ENCODE measurements at regions of chrX and their contacts with region 1.

Region 1: DNA sequence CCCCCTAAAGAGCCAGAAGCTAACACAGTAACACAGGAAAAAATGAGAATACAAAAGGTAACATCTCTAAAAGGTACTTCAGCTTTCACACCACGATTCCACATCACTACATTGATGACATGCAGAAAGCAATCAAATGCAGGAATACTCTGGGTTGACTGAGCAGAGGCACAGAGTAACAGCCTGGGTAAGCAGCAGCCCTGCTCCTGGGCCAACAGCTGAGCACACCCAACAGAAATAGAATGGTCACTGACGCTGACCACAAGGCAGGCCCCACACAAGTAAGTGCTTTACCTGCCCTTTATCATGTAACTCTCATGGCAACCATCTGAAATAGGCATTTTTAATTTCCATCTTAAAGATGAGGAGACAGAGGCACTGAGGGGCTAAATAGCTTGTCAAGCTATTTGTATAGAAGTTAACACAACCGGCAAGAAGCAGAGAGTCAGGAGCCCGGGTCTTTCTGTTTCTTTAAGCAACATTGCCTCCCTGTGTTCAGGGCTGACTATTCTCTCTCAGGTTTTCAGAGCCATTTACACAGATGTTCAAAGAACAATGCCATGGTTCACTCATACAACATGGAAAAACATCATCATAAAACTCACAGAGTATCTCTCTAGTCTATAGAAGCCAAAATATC is 168.9 kb downstream of the ZNF674 start:
- DNase-seq: peak; percentile 80
- H3K4me3 ChIP-seq: no peak overlapping the region
- H3K27ac ChIP-seq: no peak overlapping the region
- H3K4me1 ChIP-seq: peaks cover 4% of the 10 kb centered on the region
- H3K27me3 ChIP-seq: no peaks in the 10 kb centered on the region
- CTCF ChIP-seq: peak; percentile 21 to 32
- POLR2A ChIP-seq: no peak

Region 2: DNA sequence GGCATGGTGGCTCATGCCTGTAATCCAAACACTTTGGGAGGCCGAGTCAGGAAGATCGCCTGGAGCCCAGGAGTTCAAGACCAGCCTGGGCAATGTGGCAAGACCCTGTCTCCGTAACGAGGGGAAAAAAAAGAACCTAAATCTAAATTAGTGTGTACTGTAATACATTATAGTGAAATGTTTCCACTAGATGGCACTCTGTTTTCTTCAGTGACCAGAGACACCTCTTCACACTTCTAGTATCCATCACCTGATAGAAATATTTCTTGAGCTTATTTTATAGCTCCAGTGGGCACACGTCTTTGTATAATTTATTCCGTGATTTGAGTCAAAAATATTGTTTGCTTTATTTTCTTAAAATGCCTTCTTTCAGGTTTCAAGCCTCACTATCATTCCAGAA is 574.8 kb before region 1 on chrX:
- CTCF ChIA-PET with region 1: interaction called, 20 read pairs
- POLR2A ChIA-PET with region 1: no interaction called
- dilution Hi-C with region 1: no loop called
- intact Hi-C with region 1: no loop called
- DNase-seq: peak; percentile 43
- H3K4me3 ChIP-seq: no peak overlapping the region
- H3K27ac ChIP-seq: peak overlapping the region; percentile 36
- H3K4me1 ChIP-seq: peaks cover 31% of the 10 kb centered on the region
- H3K27me3 ChIP-seq: no peaks in the 10 kb centered on the region
- CTCF ChIP-seq: peak in 1 of 2 donors; percentile 9
- POLR2A ChIP-seq: no peak

Region 3: GRCh38 chrX:45849253-45849862 is 527.0 kb before region 1 on chrX:
- CTCF ChIA-PET with region 1: interaction called, 9 read pairs
- POLR2A ChIA-PET with region 1: no interaction called
- dilution Hi-C with region 1: no loop called
- intact Hi-C with region 1: loop called (anchors 1 kb)
- DNase-seq: peak; percentile 57
- H3K4me3 ChIP-seq: peak overlapping the region; percentile 47 to 87 (median 50)
- H3K27ac ChIP-seq: peak overlapping the region; percentile 37
- H3K4me1 ChIP-seq: peaks cover 5% of the 10 kb centered on the region
- H3K27me3 ChIP-seq: peaks cover 0 to 4% of the 10 kb centered on the region in 2 experiments
- CTCF ChIP-seq: peak; percentile 6 to 17
- POLR2A ChIP-seq: no peak

Region 4: DNA sequence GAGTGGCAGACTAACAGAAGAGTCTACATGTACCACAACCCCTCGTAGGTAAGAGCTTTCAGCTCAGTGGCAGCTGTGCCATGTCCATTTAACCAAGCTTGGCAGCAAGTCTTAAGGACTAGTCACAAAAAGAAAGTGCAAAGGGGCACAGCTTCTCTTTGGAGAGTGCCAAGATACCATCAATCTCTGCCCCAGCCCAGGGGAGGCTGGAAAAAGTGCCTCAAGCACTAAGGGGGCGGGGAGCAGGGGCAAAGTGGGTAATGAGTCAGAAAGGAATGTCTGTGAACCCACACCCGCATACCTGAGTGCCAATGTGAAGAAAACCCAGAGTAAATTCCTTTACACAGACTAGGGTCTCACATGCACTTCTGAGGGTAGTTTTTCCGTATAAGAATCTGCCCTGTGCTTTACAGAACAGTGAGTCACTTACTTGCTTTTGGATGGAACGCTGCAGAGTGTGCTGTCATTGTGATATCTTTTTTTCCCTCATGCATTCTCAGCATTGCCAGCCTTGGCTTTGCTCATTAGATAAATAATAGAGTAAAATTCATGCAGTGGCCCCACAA is 51.0 kb before region 1 on chrX:
- CTCF ChIA-PET with region 1: interaction called, 5 read pairs
- POLR2A ChIA-PET with region 1: no interaction called
- dilution Hi-C with region 1: no loop called
- intact Hi-C with region 1: loop called (anchors 5 kb)
- DNase-seq: peak; percentile 69
- H3K4me3 ChIP-seq: no peak overlapping the region
- H3K27ac ChIP-seq: peak overlapping the region; percentile 98
- H3K4me1 ChIP-seq: peaks cover 36% of the 10 kb centered on the region
- H3K27me3 ChIP-seq: no peaks in the 10 kb centered on the region
- CTCF ChIP-seq: no peak
- POLR2A ChIP-seq: no peak

Region 5: GRCh38 chrX:46408553-46409407 is 32.4 kb after region 1 on chrX:
- CTCF ChIA-PET with region 1: interaction called, 22 read pairs
- POLR2A ChIA-PET with region 1: no interaction called
- dilution Hi-C with region 1: no loop called
- intact Hi-C with region 1: loop called (anchors 1 kb)
- DNase-seq: peak; percentile 74
- H3K4me3 ChIP-seq: no peak overlapping the region
- H3K27ac ChIP-seq: no peak overlapping the region
- H3K4me1 ChIP-seq: no peaks in the 10 kb centered on the region
- H3K27me3 ChIP-seq: no peaks in the 10 kb centered on the region
- CTCF ChIP-seq: peak; percentile 51 to 52
- POLR2A ChIP-seq: no peak

Measured in endothelial cell of umbilical vein (primary cell).